Heart right ventricle (tissue), 16 donors: ENCODE measurements at regions of chr4 and their contacts with region 1.

Region 1: DNA sequence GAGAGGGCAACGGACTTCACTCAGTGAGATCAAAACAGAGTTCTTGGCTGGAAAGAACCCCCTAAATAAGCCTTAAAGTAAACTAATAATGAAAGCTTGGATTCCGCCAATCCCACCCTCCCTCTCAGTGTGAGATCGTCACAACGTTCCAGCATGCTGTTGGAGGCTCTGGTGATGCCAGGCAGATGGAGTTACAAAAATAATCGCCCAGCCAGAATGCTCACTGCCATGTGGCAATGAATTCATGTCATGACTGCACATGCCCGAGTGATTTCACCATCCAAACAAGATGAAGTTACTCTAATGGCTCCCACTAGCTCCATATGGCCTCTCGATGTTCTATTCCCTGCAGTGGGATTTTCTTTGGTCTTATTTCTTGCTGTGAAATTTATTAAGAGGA is 248.0 kb downstream of the SPATA18 start:
- DNase-seq: no peak
- ATAC-seq: peak in 2 of 8 donors; percentile 49 to 69
- H3K4me3 ChIP-seq: peak overlapping the region in 1 of 10 donors; percentile 4
- H3K27ac ChIP-seq: no peak overlapping the region
- H3K4me1 ChIP-seq: no peaks in the 10 kb centered on the region
- H3K27me3 ChIP-seq: no peaks in the 10 kb centered on the region
- CTCF ChIP-seq: no peak

Region 2: GRCh38 chr4:52358883-52359321 is 59.8 kb after region 1 on chr4:
- intact Hi-C with region 1: loop called in 1 of 10 experiments (anchors 10 kb)
- DNase-seq: peak in 1 of 2 donors; percentile 23
- ATAC-seq: peak; percentile 62 to 88 (median 82)
- H3K4me3 ChIP-seq: no peak overlapping the region
- H3K27ac ChIP-seq: peak overlapping the region in 1 of 10 donors; percentile 61
- H3K4me1 ChIP-seq: peaks cover 0 to 6% (median 0%) of the 10 kb centered on the region in 9 donors
- H3K27me3 ChIP-seq: no peaks in the 10 kb centered on the region
- CTCF ChIP-seq: no peak

Region 3: GRCh38 chr4:52483186-52483890 is 184.2 kb after region 1 on chr4:
- intact Hi-C with region 1: no loop called
- DNase-seq: no peak
- ATAC-seq: no peak
- H3K4me3 ChIP-seq: no peak overlapping the region
- H3K27ac ChIP-seq: no peak overlapping the region
- H3K4me1 ChIP-seq: peaks cover 0 to 4% (median 0%) of the 10 kb centered on the region in 9 donors
- H3K27me3 ChIP-seq: no peaks in the 10 kb centered on the region
- CTCF ChIP-seq: no peak